A673 (cell line): ENCODE measurements at regions of chr2 and their contacts with region 1.

Region 1: GRCh38 chr2:69715964-69716363 is 26.0 kb upstream of the ANXA4 start:
- DNase-seq: no peak
- H3K4me3 ChIP-seq: no peak overlapping the region
- H3K27ac ChIP-seq: no peak overlapping the region
- H3K4me1 ChIP-seq: no peaks in the 10 kb centered on the region
- H3K27me3 ChIP-seq: no peaks in the 10 kb centered on the region
- CTCF ChIP-seq: no peak

Region 2: GRCh38 chr2:69375494-69376353 is 340.2 kb before region 1 on chr2:
- CTCF ChIA-PET with region 1: no interaction called
- POLR2A ChIA-PET with region 1: no interaction called
- intact Hi-C with region 1: loop called (anchors 5 kb)
- DNase-seq: peak; percentile 67
- H3K4me3 ChIP-seq: no peak overlapping the region
- H3K27ac ChIP-seq: no peak overlapping the region
- H3K4me1 ChIP-seq: no peaks in the 10 kb centered on the region
- H3K27me3 ChIP-seq: no peaks in the 10 kb centered on the region
- CTCF ChIP-seq: peak; percentile 78

Region 3: GRCh38 chr2:69387770-69388481 is 328.0 kb before region 1 on chr2:
- CTCF ChIA-PET with region 1: no interaction called
- POLR2A ChIA-PET with region 1: no interaction called
- intact Hi-C with region 1: no loop called
- DNase-seq: no peak
- H3K4me3 ChIP-seq: peak overlapping the region; percentile 91
- H3K27ac ChIP-seq: peak overlapping the region; percentile 86
- H3K4me1 ChIP-seq: peaks cover 15% of the 10 kb centered on the region
- H3K27me3 ChIP-seq: no peaks in the 10 kb centered on the region
- CTCF ChIP-seq: no peak

Region 4: GRCh38 chr2:69559442-69560146 is 156.4 kb before region 1 on chr2:
- CTCF ChIA-PET with region 1: no interaction called
- POLR2A ChIA-PET with region 1: no interaction called
- intact Hi-C with region 1: loop called (anchors 2 kb)
- DNase-seq: peak; percentile 37
- H3K4me3 ChIP-seq: no peak overlapping the region
- H3K27ac ChIP-seq: no peak overlapping the region
- H3K4me1 ChIP-seq: no peaks in the 10 kb centered on the region
- H3K27me3 ChIP-seq: no peaks in the 10 kb centered on the region
- CTCF ChIP-seq: peak; percentile 66

Region 5: DNA sequence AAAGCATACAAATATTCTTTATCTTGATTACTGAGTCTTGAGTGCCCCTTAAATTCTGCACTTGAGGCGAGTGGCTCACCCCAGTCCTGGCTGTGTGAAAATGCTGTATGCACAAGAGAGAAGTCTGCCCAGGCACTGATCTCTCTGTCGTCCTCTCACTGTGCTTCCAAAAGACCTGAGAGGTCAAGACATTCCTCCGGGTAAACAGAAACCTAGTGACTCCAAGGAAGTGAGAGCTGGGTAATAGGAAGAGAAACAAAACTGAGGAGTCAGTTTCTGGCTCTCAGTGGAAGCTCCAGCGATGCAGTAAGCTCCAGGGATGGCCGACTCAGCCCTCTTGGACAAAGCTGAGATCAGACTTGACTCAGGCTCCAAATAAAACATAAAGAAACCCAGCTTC is 143.3 kb before region 1 on chr2:
- CTCF ChIA-PET with region 1: no interaction called
- POLR2A ChIA-PET with region 1: no interaction called
- intact Hi-C with region 1: no loop called
- DNase-seq: no peak
- H3K4me3 ChIP-seq: no peak overlapping the region
- H3K27ac ChIP-seq: no peak overlapping the region
- H3K4me1 ChIP-seq: no peaks in the 10 kb centered on the region
- H3K27me3 ChIP-seq: no peaks in the 10 kb centered on the region
- CTCF ChIP-seq: no peak